MCF 10A (cell line): ENCODE measurements at regions of chr20 and their contacts with region 1.

Region 1: DNA sequence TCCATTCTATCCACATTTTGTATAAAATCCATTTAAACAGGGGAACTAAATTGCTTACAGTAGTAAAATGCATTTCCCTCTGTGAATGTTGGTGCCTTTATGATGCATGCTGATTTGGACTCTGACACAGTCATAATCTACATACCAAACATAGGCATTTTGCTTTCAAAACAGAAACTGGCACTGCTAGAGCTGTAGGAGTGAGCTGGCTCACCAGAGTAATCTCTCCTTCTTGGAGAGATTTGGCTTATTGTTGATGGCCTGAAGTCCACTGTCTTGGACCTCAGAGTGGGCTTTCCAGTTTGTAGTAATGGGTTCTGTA is 363.2 kb upstream of the FLRT3 start:
- DNase-seq: peak; percentile 18
- H3K4me3 Mint-ChIP-seq: no peak overlapping the region
- H3K27ac Mint-ChIP-seq: no peak overlapping the region
- H3K4me1 Mint-ChIP-seq: peaks cover 7% of the 10 kb centered on the region
- H3K27me3 Mint-ChIP-seq: no peaks in the 10 kb centered on the region
- CTCF ChIP-seq: no peak

Region 2: DNA sequence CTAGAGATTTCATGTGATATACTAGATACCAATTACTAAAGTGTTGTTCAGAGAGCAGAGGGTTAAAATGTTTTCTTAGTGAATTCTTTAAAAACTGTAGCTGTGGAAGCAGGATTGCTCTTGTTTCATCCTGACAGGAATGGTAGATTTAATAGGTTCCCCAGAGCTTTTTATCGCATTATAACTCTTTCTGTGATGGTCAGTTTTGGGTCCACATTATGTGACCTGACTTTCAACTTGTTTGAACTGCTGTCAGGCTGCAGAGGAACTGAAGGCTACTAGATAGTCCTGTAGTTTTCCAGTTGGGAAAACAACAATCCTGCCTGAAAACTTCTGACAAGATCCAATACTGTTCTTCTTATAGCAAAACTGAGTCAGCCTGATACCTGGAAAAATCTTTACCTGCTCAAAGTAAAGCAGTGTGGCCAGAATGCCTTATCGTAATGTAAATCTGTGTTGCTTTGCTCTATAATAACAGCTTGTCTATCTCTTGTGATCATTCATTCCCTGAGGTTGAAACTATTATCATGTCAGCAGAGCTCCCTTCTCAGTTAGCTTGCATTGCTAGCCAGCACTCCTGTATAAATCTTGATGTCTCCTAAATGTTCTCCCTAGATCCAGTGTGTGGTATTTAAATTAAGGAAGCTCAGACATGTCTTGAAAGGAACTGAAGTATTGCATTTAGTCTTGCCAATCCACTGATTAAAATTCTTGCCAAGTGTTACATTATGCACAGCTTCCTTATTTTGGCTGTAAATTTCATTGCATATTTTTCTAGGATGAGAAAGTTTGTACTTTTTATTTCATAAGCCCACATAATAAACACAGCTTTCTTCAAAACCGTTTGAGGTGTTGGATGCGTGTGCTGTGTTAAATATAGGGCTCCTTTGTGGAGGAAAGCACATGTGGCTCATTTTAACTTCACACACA is 33.6 kb before region 1 on chr20:
- CTCF ChIA-PET with region 1: interaction called, 10 read pairs
- POLR2A ChIA-PET with region 1: no interaction called
- intact Hi-C with region 1: no loop called
- DNase-seq: no peak
- H3K4me3 Mint-ChIP-seq: no peak overlapping the region
- H3K27ac Mint-ChIP-seq: no peak overlapping the region
- H3K4me1 Mint-ChIP-seq: no peaks in the 10 kb centered on the region
- H3K27me3 Mint-ChIP-seq: no peaks in the 10 kb centered on the region
- CTCF ChIP-seq: no peak

Region 3: GRCh38 chr20:14712302-14712739 is 11.7 kb after region 1 on chr20:
- CTCF ChIA-PET with region 1: interaction called, 4 read pairs
- POLR2A ChIA-PET with region 1: interaction called, 64 read pairs
- intact Hi-C with region 1: no loop called
- DNase-seq: peak; percentile 35
- H3K4me3 Mint-ChIP-seq: no peak overlapping the region
- H3K27ac Mint-ChIP-seq: peak overlapping the region; percentile 86
- H3K4me1 Mint-ChIP-seq: peaks cover 26% of the 10 kb centered on the region
- H3K27me3 Mint-ChIP-seq: no peaks in the 10 kb centered on the region
- CTCF ChIP-seq: no peak